MCF 10A (cell line): ENCODE measurements at regions of chr15 and their contacts with region 1.

Region 1: DNA sequence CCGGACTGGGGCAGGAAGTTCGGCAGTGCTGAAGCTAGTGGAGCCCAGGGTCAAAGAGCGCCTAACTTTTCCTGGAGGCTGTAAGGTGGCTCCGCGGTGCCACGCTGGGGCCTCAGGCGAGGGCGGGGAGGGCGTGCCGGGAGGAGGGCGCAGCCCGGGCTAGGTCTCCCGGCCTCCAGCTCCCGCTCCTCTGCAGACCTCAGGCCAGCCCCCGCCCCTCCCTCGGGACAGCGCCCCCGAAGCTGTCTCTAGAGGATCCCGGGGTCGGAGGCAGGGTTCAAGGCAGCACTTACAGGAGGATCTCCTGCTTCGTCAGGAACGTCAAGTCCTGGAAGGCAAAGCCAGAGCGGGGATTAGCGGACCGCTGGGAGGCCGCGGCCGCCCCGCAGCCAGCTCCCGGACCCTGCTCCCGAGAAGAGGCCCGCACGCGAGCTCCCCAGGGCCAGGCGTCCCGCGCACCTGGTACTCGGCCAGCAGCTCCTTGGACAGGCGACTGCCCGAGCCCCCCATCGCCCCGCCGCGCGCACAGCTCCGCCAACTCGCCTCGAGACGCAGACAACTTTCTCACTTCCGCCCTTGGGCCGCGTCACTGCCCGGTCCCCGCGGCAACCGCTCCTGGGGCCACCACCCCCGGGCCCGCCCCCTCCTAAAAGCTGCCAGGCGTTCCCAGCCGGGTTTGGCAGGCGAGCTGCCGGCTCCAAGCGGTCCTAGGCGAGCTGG is at the start of gene CIB1:
- DNase-seq: peak; percentile 97
- H3K4me3 Mint-ChIP-seq: peak within 1 kb of the TSS; percentile 85
- H3K27ac Mint-ChIP-seq: peak within 1 kb of the TSS; percentile 12
- H3K4me1 Mint-ChIP-seq: peaks cover 19% of the 10 kb centered on the region
- H3K27me3 Mint-ChIP-seq: no peaks in the 10 kb centered on the region
- CTCF ChIP-seq: no peak
- total RNA-seq, gene CIB1: 45.6 and 50.5 TPM in 2 replicates

Region 2: DNA sequence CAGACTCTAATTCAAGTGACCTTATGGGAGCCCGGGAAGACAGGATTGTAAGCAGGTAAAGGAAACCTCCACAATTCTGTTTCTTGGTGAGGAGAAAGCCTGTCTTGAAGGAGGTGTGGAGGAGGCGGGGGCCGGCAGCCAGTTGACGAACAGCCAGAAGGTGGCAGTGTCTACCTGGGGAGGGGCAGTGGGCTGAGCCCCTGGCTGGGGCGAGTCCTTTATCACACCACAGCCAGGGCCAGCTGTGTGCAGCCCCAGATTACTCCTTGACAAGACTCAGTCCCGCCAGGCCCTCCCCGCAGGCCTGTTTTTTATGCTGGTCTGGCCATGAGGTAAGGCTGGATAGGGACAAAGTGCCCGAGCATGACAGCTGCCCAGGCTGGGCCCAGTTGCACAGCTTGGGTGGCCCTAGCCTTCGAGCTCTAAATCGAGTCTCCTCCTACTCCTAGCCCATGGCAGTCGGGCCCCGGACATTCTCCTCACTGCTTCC is 90.3 kb before region 1 on chr15:
- CTCF ChIA-PET with region 1: interaction called, 14 read pairs
- POLR2A ChIA-PET with region 1: interaction called, 7 read pairs
- intact Hi-C with region 1: no loop called
- DNase-seq: peak; percentile 69
- H3K4me3 Mint-ChIP-seq: no peak overlapping the region
- H3K27ac Mint-ChIP-seq: no peak overlapping the region
- H3K4me1 Mint-ChIP-seq: no peaks in the 10 kb centered on the region
- H3K27me3 Mint-ChIP-seq: no peaks in the 10 kb centered on the region
- CTCF ChIP-seq: peak; percentile 85

Region 3: GRCh38 chr15:90184786-90185569 is 48.6 kb before region 1 on chr15:
- CTCF ChIA-PET with region 1: interaction called, 6 read pairs
- POLR2A ChIA-PET with region 1: interaction called, 44 read pairs
- intact Hi-C with region 1: no loop called
- DNase-seq: peak; percentile 84
- H3K4me3 Mint-ChIP-seq: peak overlapping the region; percentile 88
- H3K27ac Mint-ChIP-seq: peak overlapping the region; percentile 89
- H3K4me1 Mint-ChIP-seq: peaks cover 22% of the 10 kb centered on the region
- H3K27me3 Mint-ChIP-seq: no peaks in the 10 kb centered on the region
- CTCF ChIP-seq: no peak

Region 4: DNA sequence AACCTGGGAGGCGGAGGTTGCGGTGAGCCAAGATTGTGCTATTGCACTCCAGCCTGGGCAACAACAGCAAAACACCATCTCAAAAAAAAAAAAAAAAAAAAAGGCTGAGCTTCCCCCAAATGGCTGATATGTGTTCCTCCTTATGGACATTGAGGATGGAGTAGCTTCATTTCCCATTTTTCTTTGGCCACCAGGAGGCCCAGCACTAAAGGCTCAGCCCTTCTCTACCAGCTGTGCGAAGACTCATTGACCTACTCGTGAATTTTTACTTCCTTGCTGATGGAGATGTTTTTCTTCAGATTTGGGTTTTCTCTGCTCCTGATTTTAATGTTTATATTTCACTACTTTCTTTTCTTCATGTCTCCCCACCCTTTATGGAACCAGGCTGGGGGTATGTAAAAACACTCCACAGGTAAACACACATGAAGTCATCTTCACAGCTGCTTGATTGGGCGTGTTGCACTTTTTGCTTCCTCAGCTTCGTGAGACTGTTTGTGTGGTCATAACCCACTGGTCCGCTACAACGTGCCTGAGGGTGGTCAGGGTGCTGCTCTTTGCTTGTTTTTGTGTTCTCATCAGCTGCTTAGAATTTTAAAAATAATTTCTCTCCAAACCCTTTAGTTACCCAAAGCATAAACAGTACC is 18.9 kb before region 1 on chr15:
- CTCF ChIA-PET with region 1: interaction called, 48 read pairs
- POLR2A ChIA-PET with region 1: interaction called, 66 read pairs
- intact Hi-C with region 1: no loop called
- DNase-seq: no peak
- H3K4me3 Mint-ChIP-seq: no peak overlapping the region
- H3K27ac Mint-ChIP-seq: no peak overlapping the region
- H3K4me1 Mint-ChIP-seq: peaks cover 39% of the 10 kb centered on the region
- H3K27me3 Mint-ChIP-seq: no peaks in the 10 kb centered on the region
- CTCF ChIP-seq: peak; percentile 23

Region 5: GRCh38 chr15:90265271-90266060 is 31.9 kb after region 1 on chr15 and contains the start of gene NGRN:
- CTCF ChIA-PET with region 1: interaction called, 4 read pairs
- POLR2A ChIA-PET with region 1: interaction called, 20 read pairs
- intact Hi-C with region 1: loop called (anchors 2 kb)
- DNase-seq: peak; percentile 90
- H3K4me3 Mint-ChIP-seq: peak within 1 kb of the TSS; percentile 97
- H3K27ac Mint-ChIP-seq: peak within 1 kb of the TSS; percentile 96
- H3K4me1 Mint-ChIP-seq: peaks cover 38% of the 10 kb centered on the region
- H3K27me3 Mint-ChIP-seq: no peaks in the 10 kb centered on the region
- CTCF ChIP-seq: no peak
- total RNA-seq, gene NGRN: 70.5 and 77.0 TPM in 2 replicates